Activated T-helper 1 cell treated with anti-CD3 and anti-CD28 coated beads, Interleukin-12 subunit alpha, Interleukin-12 subunit beta, Interleukin-2, Interleukin-4 antibody, amounts not matched to agents 30 ng/mL and 10 ng/mL and 1 ng/mL, durations not matched to agents 14 hours and 24 hours and 36 hours (primary cell): ENCODE measurements at regions of chr12 and their contacts with region 1.

Region 1: GRCh38 chr12:121793838-121794533 is 498 bp upstream of the RHOF start:
- DNase-seq: peak; percentile 95
- H3K4me3 Mint-ChIP-seq: peak overlapping the region; percentile 96
- H3K27ac Mint-ChIP-seq: peak overlapping the region; percentile 91
- H3K4me1 Mint-ChIP-seq: peaks cover 61% of the 10 kb centered on the region
- H3K27me3 Mint-ChIP-seq: no peaks in the 10 kb centered on the region

Region 2: DNA sequence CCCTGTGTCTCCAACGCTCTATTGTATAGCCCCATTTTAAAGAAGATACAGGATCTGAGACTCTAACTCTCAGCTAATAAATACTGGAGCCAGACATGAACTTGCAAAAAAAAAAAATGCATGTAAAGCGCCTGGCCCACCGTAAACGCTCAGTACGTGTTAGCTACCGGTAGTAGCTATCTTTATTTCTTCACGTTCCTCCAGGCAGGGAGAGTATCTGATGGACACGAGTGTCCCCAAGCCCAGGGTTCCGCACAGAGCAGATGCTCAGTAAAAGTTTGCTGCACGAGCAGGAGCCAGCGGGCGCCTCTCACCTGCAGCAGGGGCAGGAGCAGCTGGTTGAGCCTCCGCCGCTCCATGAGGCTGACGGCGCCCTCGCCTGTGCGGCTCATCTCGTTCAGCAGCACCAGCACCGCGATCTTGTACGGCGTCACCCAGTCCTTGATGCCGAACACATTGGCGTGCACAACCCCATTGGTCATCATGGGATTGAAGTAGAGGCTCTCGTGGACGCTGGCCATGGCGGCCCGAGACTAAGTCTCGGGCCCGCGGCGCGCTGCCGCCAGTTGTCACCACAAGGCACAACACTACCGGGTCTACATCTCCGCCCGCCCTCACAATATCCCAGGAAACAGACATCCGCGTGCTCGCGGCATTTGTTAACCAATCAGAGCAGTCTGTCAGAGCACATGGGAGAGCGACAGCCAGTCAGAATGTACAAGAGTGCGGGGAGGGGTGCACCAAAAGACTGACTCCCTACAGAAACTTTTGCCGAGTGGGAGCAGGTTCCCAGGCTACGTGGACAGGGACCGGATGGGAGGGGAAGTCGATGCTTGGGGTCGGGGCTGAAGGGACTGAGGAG is 441.9 kb before region 1 on chr12 and contains the start of gene ANAPC5:
- intact Hi-C with region 1: loop called (anchors 5 kb)
- DNase-seq: peak; percentile 90
- H3K4me3 Mint-ChIP-seq: peak within 1 kb of the TSS; percentile 95
- H3K27ac Mint-ChIP-seq: peak within 1 kb of the TSS; percentile 98
- H3K4me1 Mint-ChIP-seq: peaks cover 33% of the 10 kb centered on the region
- H3K27me3 Mint-ChIP-seq: peaks cover 10% of the 10 kb centered on the region
- total RNA-seq, gene ANAPC5: 139 and 144 TPM in 2 replicates

Region 3: GRCh38 chr12:121499929-121500793 is 293.8 kb before region 1 on chr12:
- intact Hi-C with region 1: no loop called
- DNase-seq: peak; percentile 55
- H3K4me3 Mint-ChIP-seq: no peak overlapping the region
- H3K27ac Mint-ChIP-seq: no peak overlapping the region
- H3K4me1 Mint-ChIP-seq: peaks cover 12% of the 10 kb centered on the region
- H3K27me3 Mint-ChIP-seq: no peaks in the 10 kb centered on the region

Region 4: DNA sequence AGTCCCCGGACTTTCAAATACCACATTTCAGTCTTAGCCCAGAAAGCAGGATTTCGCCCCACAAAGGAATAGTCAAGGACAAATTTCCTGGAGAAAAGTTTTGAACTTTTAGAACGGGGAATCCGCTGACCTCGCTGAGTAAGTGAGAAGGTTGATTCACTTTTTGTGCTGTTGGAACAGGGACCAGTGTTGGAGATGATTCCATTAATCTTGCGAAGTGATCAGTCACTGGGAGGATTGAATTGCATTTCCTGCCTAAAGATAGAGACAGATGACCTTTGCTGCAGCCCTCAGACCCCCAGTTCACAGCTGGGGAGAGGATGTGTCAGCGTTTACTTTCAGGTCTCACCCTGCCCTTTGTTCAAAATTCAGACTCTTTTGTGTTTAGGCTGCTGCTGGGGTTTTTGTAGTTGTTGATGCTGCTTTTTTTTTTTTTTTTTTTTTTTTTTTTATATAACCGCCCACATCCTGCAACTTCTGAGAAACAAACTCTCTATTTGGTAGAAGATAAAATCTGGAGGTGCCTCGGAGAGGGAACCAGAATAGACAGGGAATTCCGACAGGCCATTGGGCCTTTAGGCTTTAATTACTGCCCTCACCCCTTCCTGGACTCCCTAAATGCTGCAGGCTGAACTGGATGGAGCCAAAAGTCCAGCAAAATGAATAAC is 203.4 kb before region 1 on chr12:
- intact Hi-C with region 1: loop called (anchors 5 kb)
- DNase-seq: peak; percentile 64
- H3K4me3 Mint-ChIP-seq: peak overlapping the region; percentile 80
- H3K27ac Mint-ChIP-seq: peak overlapping the region; percentile 95
- H3K4me1 Mint-ChIP-seq: peaks cover 26% of the 10 kb centered on the region
- H3K27me3 Mint-ChIP-seq: no peaks in the 10 kb centered on the region

Region 5: GRCh38 chr12:121712461-121713256 is 81.3 kb before region 1 on chr12 and contains the start of gene TMEM120B:
- intact Hi-C with region 1: loop called (anchors 1 kb)
- DNase-seq: peak; percentile 83
- H3K4me3 Mint-ChIP-seq: peak within 1 kb of the TSS; percentile 97
- H3K27ac Mint-ChIP-seq: peak within 1 kb of the TSS; percentile 91
- H3K4me1 Mint-ChIP-seq: peaks cover 28% of the 10 kb centered on the region
- H3K27me3 Mint-ChIP-seq: peaks cover 4% of the 10 kb centered on the region
- total RNA-seq, gene TMEM120B: 17.5 and 18.3 TPM in 2 replicates

Region 6: DNA sequence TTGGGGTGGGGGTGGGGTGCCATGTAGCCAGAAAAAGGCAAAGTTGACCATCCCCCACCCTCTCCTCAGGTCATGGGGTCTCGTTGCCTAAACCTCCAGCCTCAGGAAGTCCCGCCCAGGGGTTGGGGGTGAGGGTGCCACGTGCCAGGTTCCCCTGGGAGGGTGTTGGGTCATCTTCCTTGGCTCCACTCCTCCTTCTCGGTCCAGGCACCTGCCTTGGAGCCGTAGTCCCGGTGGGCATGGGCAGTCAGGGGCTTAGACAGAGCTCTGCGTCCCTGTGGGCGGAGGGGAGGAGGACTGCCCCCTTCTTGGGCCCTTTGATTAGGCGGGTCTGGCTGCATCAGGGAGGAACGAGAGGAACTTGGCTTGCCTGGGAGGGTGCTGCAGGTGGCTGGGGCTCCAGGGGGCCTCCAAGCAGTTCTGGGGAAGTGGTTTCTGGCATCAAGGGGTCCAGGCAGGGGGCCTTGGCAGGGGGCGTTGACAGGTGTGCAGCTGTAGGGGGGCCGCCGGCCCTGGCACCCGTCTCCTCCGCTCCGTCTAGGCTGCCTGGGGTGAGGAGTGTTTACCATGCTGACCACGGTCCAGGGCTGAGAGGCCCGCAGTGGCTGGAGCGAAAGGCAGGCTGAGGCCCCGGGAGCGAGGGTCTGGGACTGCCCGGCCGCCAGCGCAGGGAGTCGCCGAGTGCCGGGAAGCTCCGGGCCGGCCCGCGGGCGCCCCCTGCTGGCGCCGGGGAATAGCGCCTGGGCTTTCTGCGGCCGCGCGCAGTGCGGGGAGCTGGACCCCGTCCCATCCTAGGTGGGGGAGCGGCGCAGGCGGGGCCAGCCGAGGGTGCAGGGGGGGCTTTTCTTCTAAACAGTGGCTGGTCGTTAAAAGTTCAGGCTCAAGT is 17.7 kb after region 1 on chr12:
- intact Hi-C with region 1: loop called (anchors 1 kb)
- DNase-seq: peak; percentile 67
- H3K4me3 Mint-ChIP-seq: peak overlapping the region; percentile 85
- H3K27ac Mint-ChIP-seq: peak overlapping the region; percentile 40
- H3K4me1 Mint-ChIP-seq: peaks cover 35% of the 10 kb centered on the region
- H3K27me3 Mint-ChIP-seq: no peaks in the 10 kb centered on the region

Region 7: GRCh38 chr12:122021822-122022526 is 228.0 kb after region 1 on chr12 and contains the start of gene BCL7A:
- intact Hi-C with region 1: no loop called
- DNase-seq: peak; percentile 47
- H3K4me3 Mint-ChIP-seq: peak within 1 kb of the TSS; percentile 87
- H3K27ac Mint-ChIP-seq: peak within 1 kb of the TSS; percentile 92
- H3K4me1 Mint-ChIP-seq: peaks cover 13% of the 10 kb centered on the region
- H3K27me3 Mint-ChIP-seq: peaks cover 32% of the 10 kb centered on the region
- total RNA-seq, gene BCL7A: 9.7 and 13.0 TPM in 2 replicates

Region 8: GRCh38 chr12:122078141-122079032 is 284.4 kb after region 1 on chr12 and contains the start of gene MLXIP:
- intact Hi-C with region 1: loop called (anchors 5 kb)
- DNase-seq: peak; percentile 88
- H3K4me3 Mint-ChIP-seq: peak within 1 kb of the TSS; percentile 94
- H3K27ac Mint-ChIP-seq: peak within 1 kb of the TSS; percentile 76
- H3K4me1 Mint-ChIP-seq: peaks cover 44% of the 10 kb centered on the region
- H3K27me3 Mint-ChIP-seq: peaks cover 6% of the 10 kb centered on the region
- total RNA-seq, gene MLXIP: 59.0 and 62.1 TPM in 2 replicates